ENCODE measurements at regions of chr6 and their contacts with region 1.

Region 1: GRCh38 chr6:70706491-70707123 is 38.9 kb downstream of the SMAP1 start:
- DNase-seq: no peak
- H3K4me3 Mint-ChIP-seq: no peak overlapping the region
- H3K27ac Mint-ChIP-seq: no peak overlapping the region
- H3K4me1 Mint-ChIP-seq: peaks cover 11% of the 10 kb centered on the region
- H3K27me3 Mint-ChIP-seq: no peaks in the 10 kb centered on the region

Region 2: GRCh38 chr6:70629929-70630328 is 76.7 kb before region 1 on chr6:
- CTCF ChIA-PET with region 1: no interaction called
- DNase-seq: no peak
- H3K4me3 Mint-ChIP-seq: no peak overlapping the region
- H3K27ac Mint-ChIP-seq: no peak overlapping the region
- H3K4me1 Mint-ChIP-seq: no peaks in the 10 kb centered on the region
- H3K27me3 Mint-ChIP-seq: peaks cover 20% of the 10 kb centered on the region

Region 3: GRCh38 chr6:70686548-70687133 is 20.0 kb before region 1 on chr6:
- CTCF ChIA-PET with region 1: no interaction called
- DNase-seq: no peak
- H3K4me3 Mint-ChIP-seq: no peak overlapping the region
- H3K27ac Mint-ChIP-seq: no peak overlapping the region
- H3K4me1 Mint-ChIP-seq: peaks cover 45% of the 10 kb centered on the region
- H3K27me3 Mint-ChIP-seq: no peaks in the 10 kb centered on the region

Region 4: DNA sequence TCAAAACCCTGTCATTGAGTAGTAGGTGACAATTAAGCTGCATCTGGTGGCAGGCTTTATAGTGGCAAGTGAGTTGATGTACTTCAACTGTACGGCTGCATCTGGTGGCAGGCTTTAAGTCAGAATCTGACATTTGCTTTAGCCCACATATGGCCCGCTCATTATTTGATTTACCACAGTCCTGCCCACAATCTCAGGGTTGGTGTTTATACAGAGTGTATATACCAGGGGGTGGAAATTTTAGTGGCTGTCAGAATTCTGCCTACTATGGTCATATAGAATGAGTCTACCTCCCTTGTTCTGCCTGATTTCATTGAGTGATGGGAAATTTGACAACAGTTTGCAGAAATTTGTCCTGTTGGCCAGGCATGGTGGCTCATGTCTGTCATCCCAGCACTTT is 73.3 kb after region 1 on chr6:
- CTCF ChIA-PET with region 1: no interaction called
- DNase-seq: no peak
- H3K4me3 Mint-ChIP-seq: no peak overlapping the region
- H3K27ac Mint-ChIP-seq: no peak overlapping the region
- H3K4me1 Mint-ChIP-seq: no peaks in the 10 kb centered on the region
- H3K27me3 Mint-ChIP-seq: no peaks in the 10 kb centered on the region

Region 5: GRCh38 chr6:70955441-70956190 is 249.0 kb after region 1 on chr6:
- CTCF ChIA-PET with region 1: interaction called, 14 read pairs
- DNase-seq: peak; percentile 90
- H3K4me3 Mint-ChIP-seq: peak overlapping the region; percentile 66
- H3K27ac Mint-ChIP-seq: peak overlapping the region; percentile 42
- H3K4me1 Mint-ChIP-seq: peaks cover 22% of the 10 kb centered on the region
- H3K27me3 Mint-ChIP-seq: peaks cover 74% of the 10 kb centered on the region

Measured in activated naive CD4-positive, alpha-beta T cell treated with anti-CD3 and anti-CD28 coated beads, Interleukin-2, amount 10 ng/mL, durations not matched to agents 7 days and 5 days (primary cell).